ENCODE measurements at regions of chr3 and their contacts with region 1.

Region 1: DNA sequence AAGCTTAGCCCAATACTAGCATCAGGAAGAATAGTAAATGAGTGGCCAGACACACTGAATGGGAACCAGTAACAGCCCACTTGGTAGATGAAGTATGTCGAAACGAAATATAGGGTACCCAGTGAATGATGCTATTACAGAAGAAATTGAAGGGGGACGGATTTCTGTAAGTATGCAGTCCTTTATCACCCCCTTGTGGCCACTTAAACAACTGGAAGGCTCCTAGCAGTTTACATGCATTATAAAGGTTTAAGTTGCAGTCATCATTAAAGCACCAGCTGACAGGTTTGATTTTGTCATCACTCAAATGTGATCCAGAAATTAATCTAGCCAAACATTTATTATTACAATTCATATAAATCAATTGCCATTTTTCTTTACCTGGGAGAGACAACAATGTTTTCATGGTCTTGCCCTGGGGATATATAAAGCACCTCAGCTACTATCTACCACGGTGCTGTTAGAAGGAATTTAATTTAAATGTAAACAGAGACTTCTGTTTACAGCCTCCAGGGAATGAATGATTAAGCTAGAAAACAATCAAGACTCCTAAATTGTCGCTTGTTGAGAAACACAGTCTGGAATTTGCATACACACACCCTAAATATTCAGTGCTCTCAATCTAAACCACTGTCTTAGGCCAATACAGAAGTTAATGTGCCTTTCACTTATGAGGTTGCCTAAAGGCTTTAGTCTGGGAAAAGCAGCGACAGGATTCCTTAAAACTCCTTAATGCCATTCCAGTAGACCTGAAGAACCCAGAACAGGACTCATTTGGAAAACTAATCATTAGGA is 7.8 kb downstream of the EIF1B start:
- DNase-seq: no peak
- ATAC-seq: peak; percentile 21

Region 2: GRCh38 chr3:40191850-40192448 is 125.3 kb before region 1 on chr3:
- intact Hi-C with region 1: loop called (anchors 2 kb)
- DNase-seq: peak; percentile 60
- ATAC-seq: peak; percentile 58

Region 3: DNA sequence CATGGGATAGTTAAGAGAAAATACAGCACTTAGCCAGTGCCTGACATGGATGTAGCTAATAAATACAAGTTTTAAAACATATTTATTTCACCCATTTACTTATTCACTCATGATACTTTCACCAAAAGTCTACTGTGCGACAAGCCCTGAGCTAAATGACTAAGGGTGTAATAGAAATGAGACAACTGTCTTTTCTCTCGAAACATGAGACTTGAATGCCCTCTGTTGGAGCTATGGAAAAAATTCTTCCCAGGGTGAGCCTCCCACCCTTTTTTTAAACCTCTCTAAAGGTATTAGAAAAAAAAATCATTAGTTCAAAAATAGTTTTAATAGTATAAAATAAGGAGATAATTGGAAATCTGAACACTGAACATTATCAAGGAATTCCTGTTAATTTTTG is 115.5 kb after region 1 on chr3:
- intact Hi-C with region 1: loop called (anchors 10 kb)
- DNase-seq: no peak
- ATAC-seq: no peak

Region 4: DNA sequence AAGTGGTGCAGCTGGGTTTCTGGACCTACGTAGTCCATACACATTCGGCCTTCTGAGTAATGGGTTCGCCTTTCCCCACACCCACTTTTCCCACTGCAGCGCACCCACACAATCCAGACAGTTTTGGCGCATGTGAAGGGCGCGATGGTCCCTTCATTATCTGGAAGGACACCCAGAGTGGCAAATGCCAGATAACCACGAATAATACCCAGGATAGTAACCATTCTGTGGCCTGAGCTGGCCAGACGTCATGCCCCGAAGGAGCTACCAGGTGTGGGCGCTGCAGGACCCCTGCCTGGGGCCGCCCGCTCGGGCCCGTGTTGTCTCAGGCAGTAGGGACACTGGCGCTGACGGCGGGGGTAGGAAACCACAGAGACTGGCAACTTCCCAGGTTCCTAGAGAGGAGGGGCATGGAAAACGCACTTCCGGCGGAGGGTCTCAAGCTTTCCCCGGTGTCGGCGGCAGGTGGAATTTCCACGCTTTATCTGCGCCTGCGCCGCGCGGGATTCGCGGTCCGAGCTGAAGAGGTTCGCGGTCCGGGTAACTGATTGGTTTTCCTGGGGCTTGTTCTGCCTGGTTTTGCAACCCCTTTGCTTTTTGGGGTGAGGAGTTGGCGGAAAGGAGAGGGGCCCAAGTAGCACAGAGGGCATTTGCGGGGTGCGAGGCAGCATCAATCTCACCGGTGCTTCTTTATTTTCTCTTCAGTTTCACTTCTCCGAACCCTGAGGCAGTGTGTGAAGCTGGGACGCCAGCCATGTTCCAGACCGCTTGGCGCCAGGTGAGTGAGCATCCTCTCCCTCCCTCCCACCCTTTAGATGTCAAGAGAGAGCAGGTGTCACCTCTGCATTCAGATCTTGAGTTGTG is 188.6 kb after region 1 on chr3 and contains the start of gene ZNF620:
- intact Hi-C with region 1: no loop called
- DNase-seq: peak; percentile 80
- ATAC-seq: peak; percentile 96
- total RNA-seq, gene ZNF620: 1.0 TPM

Region 5: DNA sequence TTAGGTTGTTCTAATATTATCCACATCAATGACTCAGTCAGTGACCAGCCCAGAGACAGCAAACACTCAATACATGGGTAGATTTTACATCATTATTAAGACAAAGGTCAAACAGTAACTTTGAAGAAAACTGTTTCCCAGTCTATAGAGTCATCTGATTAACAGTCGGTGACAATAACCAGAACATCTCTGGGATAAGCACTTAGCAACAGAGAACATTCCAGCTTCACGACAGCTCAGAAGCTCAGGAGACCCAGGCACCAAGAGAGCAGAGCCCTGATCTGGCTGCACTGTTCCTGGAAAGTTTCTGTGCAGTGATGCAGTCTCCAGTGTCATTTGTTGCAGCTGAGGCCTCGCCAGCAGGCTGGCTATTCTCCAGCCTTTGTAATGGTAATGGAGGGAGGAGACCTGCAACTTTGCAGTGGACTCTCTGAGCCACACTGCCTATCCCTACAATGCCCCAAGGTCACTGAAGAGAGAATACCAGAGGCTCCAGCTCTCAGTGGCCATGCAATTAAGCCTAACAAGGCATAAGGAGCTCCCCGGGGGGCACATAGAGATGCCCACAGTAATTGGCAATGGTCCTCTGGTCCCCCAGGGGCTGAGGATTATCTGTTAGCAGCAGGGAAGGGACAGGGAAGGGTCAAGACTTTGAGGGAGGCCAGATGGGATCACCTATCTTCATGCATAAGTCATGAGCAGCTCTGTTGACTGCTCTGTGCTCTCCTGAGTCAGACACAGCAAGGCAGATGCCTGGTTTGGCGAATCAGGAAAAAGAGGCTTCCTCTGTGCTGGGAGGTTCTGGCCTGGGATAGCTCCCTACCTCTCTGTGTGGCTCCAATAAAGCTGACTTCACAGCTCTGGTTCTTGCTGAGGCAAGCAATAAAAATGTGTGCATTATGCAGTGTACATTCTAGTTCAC is 1045.6 kb after region 1 on chr3:
- intact Hi-C with region 1: no loop called
- DNase-seq: no peak
- ATAC-seq: peak; percentile 56